GM18951 (cell line): ENCODE measurements at regions of chr21 and their contacts with region 1.

Region 1: GRCh38 chr21:38733973-38734546 is 71.7 kb upstream of the ETS2 start:
- POLR2A ChIP-seq: no peak

Region 2: GRCh38 chr21:39120876-39121599 is 387.0 kb after region 1 on chr21:
- in situ Hi-C with region 1: loop called (anchors 5 kb)
- POLR2A ChIP-seq: no peak

Region 3: GRCh38 chr21:39445321-39446269 is 711.5 kb after region 1 on chr21 and contains the start of gene LCA5L:
- in situ Hi-C with region 1: loop called (anchors 25 kb)
- POLR2A ChIP-seq: peak; percentile 85